Heart right ventricle (tissue), 16 donors: ENCODE measurements at regions of chr1 and their contacts with region 1.

Region 1: GRCh38 chr1:155208541-155209311 is at the start of gene MTX1:
- DNase-seq: peak; percentile 93 to 95
- ATAC-seq: peak; percentile 86 to 92 (median 90)
- H3K4me3 ChIP-seq: peak within 1 kb of the TSS; percentile 64 to 91 (median 82)
- H3K27ac ChIP-seq: peak within 1 kb of the TSS; percentile 98 to 100 (median 100)
- H3K4me1 ChIP-seq: peaks cover 9 to 43% (median 31%) of the 10 kb centered on the region in 9 donors
- H3K27me3 ChIP-seq: no peaks in the 10 kb centered on the region
- CTCF ChIP-seq: no peak
- total RNA-seq, gene MTX1: 13.1 to 25.8 (median 17.1) TPM

Region 2: DNA sequence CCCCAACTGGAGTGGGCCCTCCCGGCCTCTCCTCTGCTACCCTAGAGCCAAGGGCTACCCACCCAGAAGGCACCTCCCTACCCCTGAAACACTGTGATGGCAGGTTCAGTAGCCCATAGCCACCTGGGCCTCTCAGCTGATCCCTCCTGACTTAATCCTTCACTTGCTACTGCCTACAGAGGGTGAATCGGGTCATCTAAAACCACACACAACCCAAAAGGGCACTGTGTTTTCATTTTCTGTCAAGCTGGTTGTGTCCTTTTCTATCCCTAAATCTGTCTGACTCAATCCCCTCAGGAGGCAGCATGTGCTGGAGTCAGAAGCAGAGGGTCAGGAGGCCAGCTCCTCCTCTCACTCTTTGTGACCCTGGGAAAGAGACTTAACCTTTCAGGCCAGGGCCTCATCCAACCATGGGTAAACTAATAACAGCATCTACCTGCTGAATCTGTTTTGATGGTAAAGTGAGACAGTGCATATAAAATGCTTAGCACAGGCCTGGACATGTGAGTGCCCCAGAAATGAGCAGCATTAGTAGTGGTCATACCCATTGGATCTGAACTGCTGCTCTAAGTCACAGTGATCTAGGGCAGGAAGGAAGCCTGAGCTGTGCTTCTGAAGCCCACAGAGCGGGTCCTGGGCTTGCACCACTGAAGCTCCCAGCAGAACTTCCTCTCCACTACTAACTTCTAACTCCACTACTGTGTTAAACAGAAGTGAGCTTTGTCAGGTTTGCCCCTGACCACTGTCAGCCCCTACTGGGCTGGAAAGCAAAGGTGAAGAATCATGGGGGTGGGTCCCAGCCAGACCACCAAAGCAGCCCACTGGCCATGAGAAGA is 283.2 kb before region 1 on chr1:
- intact Hi-C with region 1: no loop called
- DNase-seq: no peak
- ATAC-seq: peak in 2 of 8 donors; percentile 12 to 13
- H3K4me3 ChIP-seq: no peak overlapping the region
- H3K27ac ChIP-seq: no peak overlapping the region
- H3K4me1 ChIP-seq: peaks cover 0 to 7% (median 0%) of the 10 kb centered on the region in 9 donors
- H3K27me3 ChIP-seq: no peaks in the 10 kb centered on the region
- CTCF ChIP-seq: no peak

Region 3: DNA sequence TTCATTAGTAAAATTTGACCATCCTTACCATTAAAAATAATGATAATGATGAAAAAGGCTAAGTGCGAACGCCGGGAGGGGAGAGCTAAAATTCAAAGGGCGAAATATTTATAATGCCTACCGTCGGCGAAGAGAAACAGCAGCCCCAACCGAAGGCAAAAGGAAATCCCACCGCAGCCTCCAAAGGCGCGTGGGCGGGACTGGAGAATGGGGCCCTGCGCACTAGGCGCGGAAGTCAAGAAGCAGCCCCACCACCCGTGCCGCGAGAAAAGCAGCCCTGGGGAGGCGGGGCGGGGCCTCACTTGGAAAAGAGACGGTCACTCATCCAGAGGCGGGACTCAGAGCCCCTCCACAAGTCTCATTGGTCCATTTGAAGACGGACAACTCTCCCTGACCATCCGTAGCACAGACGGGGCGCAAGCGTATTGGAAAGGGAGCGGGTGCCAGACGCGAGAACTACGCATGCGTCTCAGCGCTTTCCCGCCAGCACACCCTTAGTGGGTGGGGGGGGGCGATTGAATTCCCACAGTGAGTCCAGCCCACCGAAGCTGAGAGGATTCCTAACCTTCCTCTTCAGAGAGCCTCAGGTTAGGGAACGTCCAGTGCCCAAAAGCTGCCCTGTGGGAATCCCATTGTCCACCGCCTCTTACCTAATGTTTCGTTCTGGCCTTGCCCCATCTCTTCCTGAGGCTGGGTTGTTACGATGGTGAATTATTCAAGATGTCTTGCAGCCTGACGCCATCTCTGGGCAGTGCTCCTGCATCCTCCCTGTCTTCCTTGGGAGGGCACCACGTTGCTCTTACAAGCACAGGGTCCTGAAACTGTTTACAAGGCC is 18.8 kb after region 1 on chr1:
- intact Hi-C with region 1: loop called in 2 of 10 experiments (anchors 1 to 2 kb)
- DNase-seq: peak; percentile 96 to 99
- ATAC-seq: peak; percentile 97 to 99 (median 98)
- H3K4me3 ChIP-seq: peak overlapping the region; percentile 32 to 73 (median 62)
- H3K27ac ChIP-seq: peak overlapping the region; percentile 42 to 91 (median 88)
- H3K4me1 ChIP-seq: peaks cover 6 to 54% (median 21%) of the 10 kb centered on the region in 9 donors
- H3K27me3 ChIP-seq: no peaks in the 10 kb centered on the region
- CTCF ChIP-seq: peak in 1 of 9 donors; percentile 10

Region 4: GRCh38 chr1:155244368-155245162 is 35.8 kb after region 1 on chr1:
- intact Hi-C with region 1: loop called in 4 of 10 experiments (anchors 1 to 5 kb)
- DNase-seq: peak; percentile 95 to 99
- ATAC-seq: peak; percentile 91 to 97 (median 96)
- H3K4me3 ChIP-seq: peak overlapping the region; percentile 27 to 84 (median 69)
- H3K27ac ChIP-seq: peak overlapping the region; percentile 71 to 96 (median 92)
- H3K4me1 ChIP-seq: peaks cover 3 to 47% (median 28%) of the 10 kb centered on the region in 9 donors
- H3K27me3 ChIP-seq: no peaks in the 10 kb centered on the region
- CTCF ChIP-seq: peak in 5 of 9 donors; percentile 24 to 46 (median 39)

Region 5: GRCh38 chr1:155424091-155424490 is 215.4 kb after region 1 on chr1:
- intact Hi-C with region 1: no loop called
- DNase-seq: no peak
- ATAC-seq: no peak
- H3K4me3 ChIP-seq: no peak overlapping the region
- H3K27ac ChIP-seq: no peak overlapping the region
- H3K4me1 ChIP-seq: peaks cover 0 to 5% (median 0%) of the 10 kb centered on the region in 9 donors
- H3K27me3 ChIP-seq: no peaks in the 10 kb centered on the region
- CTCF ChIP-seq: no peak